ENCODE measurements at regions of chr6 and their contacts with region 1.

Region 1: GRCh38 chr6:113858480-113859348 is 1.6 kb downstream of the MARCKS start:
- DNase-seq: peak; percentile 77
- ATAC-seq: peak; percentile 83
- H3K4me3 ChIP-seq: peak overlapping the region; percentile 94 to 98
- H3K27ac ChIP-seq: peak overlapping the region; percentile 79
- H3K4me1 ChIP-seq: peaks cover 11 to 28% of the 10 kb centered on the region in 2 experiments; a peak in 3 of 4 replicates
- H3K27me3 ChIP-seq: no peaks in the 10 kb centered on the region
- CTCF ChIP-seq: peak; percentile 40 to 86 (median 79); a peak in 5 of 6 replicates
- POLR2A ChIP-seq: peak; percentile 57
- RAD21 ChIP-seq: peak; percentile 81

Region 2: DNA sequence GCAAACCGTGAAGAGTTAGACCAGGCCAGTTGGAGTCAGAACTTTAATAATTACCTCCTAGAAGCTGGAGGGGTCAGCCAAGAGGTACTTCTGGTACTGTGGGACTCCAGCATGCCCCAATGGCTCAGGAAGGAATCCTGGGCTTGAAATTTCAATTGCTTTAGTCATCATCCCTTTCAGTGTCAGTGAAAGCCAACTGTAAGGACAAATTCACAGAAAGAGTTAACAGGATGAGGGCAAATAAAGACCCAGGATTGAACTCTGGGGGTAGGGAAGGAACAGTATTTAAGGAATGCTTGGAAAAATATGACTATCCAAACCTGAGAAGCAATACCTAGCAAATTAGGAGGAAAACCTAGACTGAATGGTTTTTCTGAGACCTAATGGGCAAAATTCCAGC is 736.7 kb before region 1 on chr6:
- CTCF ChIA-PET with region 1: interaction called, 3 read pairs
- POLR2A ChIA-PET with region 1: no interaction called
- RAD21 ChIA-PET with region 1: no interaction called
- intact Hi-C with region 1: loop called (anchors 1 kb)
- DNase-seq: peak; percentile 73
- ATAC-seq: peak; percentile 82
- H3K4me3 ChIP-seq: no peak overlapping the region
- H3K27ac ChIP-seq: no peak overlapping the region
- H3K4me1 ChIP-seq: peaks cover 17 to 32% of the 10 kb centered on the region in 2 experiments; a peak in 3 of 4 replicates
- H3K27me3 ChIP-seq: no peaks in the 10 kb centered on the region
- CTCF ChIP-seq: peak; percentile 25 to 47 (median 38); a peak in 5 of 6 replicates
- POLR2A ChIP-seq: no peak
- RAD21 ChIP-seq: peak; percentile 58

Region 3: DNA sequence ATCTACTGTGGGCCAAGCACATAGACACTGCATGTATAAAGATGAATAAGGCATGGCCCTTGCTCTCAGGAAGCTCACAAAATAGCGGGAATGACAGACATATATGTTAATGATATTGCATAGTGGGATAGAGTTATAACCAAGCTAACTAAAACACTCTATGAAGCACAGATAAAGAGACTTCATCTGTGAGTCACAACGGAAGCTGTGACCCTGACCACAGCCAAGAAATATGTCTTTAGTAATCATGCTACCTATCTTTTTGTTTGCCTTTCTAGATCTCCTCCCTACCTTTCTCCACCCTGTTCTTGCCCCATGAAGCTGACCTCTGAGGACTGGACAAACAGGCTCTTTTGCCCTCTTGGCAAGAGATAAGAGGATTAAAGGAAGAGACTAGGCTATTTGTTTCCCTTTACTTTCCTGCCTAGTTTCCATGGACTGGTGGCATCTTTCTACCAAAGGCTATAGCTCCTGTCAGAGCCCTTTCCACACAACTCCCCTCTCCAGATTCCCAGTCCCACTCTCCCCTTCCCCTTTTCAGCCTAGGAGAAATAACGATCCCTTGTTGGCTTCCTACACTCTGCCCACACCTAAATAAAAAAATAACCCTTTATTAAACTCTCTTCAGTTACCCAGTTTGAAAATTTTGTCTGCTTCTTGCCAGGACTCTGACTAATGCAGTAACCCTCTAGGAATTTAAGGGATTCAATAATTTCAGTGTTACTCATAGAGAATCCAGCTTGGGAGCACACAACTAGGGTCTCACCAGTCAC is 506.5 kb before region 1 on chr6:
- CTCF ChIA-PET with region 1: interaction called, 3 read pairs
- POLR2A ChIA-PET with region 1: interaction called, 4 read pairs
- RAD21 ChIA-PET with region 1: no interaction called
- intact Hi-C with region 1: loop called (anchors 5 kb)
- DNase-seq: peak; percentile 90
- ATAC-seq: peak; percentile 88
- H3K4me3 ChIP-seq: peak overlapping the region in 1 of 2 experiments; percentile 43; a peak in 3 of 4 replicates
- H3K27ac ChIP-seq: peak overlapping the region; percentile 53; the same call in 1 of the 2 replicates
- H3K4me1 ChIP-seq: peaks cover 21 to 57% of the 10 kb centered on the region in 2 experiments
- H3K27me3 ChIP-seq: no peaks in the 10 kb centered on the region
- CTCF ChIP-seq: no peak
- POLR2A ChIP-seq: no peak
- RAD21 ChIP-seq: peak; percentile 27

Region 4: GRCh38 chr6:113464959-113465358 is 393.8 kb before region 1 on chr6:
- CTCF ChIA-PET with region 1: interaction called, 5 read pairs
- POLR2A ChIA-PET with region 1: interaction called, 4 read pairs
- RAD21 ChIA-PET with region 1: no interaction called
- intact Hi-C with region 1: loop called (anchors 5 kb)
- DNase-seq: peak; percentile 42
- ATAC-seq: peak; percentile 89
- H3K4me3 ChIP-seq: peak overlapping the region in 1 of 2 experiments; percentile 4; a peak in 1 of 4 replicates
- H3K27ac ChIP-seq: no peak overlapping the region
- H3K4me1 ChIP-seq: peaks cover 8 to 19% of the 10 kb centered on the region in 2 experiments
- H3K27me3 ChIP-seq: no peaks in the 10 kb centered on the region
- CTCF ChIP-seq: no peak
- POLR2A ChIP-seq: no peak
- RAD21 ChIP-seq: peak; percentile 26; the same call in 1 of the 2 replicates

Region 5: GRCh38 chr6:113690281-113691259 is 168.1 kb before region 1 on chr6:
- CTCF ChIA-PET with region 1: interaction called, 4 read pairs
- POLR2A ChIA-PET with region 1: interaction called, 3 read pairs
- RAD21 ChIA-PET with region 1: no interaction called
- intact Hi-C with region 1: loop called (anchors 1 kb)
- DNase-seq: no peak
- ATAC-seq: no peak
- H3K4me3 ChIP-seq: no peak overlapping the region
- H3K27ac ChIP-seq: no peak overlapping the region
- H3K4me1 ChIP-seq: peaks cover 14 to 48% of the 10 kb centered on the region in 2 experiments; a peak in 3 of 4 replicates
- H3K27me3 ChIP-seq: no peaks in the 10 kb centered on the region
- CTCF ChIP-seq: no peak
- POLR2A ChIP-seq: no peak
- RAD21 ChIP-seq: peak; percentile 5; the same call in 1 of the 2 replicates

Region 6: DNA sequence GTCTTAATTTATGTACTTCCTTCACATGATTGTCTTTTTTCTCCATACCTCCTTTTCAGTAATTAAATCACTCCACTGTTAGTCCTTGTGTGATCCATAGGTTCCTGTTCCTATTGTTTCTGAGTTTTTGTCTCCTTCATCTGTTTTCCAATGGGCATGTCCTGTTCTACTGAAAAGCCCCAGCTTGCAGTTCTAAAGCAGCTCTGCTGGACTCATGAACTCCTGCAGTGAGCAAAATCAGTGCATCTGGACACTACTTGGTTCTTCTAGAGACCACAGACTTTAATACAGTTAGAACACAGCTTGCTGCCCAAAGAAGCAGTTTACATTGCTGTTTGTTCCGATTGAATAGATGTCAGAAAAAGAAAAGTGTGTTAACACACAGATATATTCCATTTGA is 1077.4 kb after region 1 on chr6:
- CTCF ChIA-PET with region 1: no interaction called
- POLR2A ChIA-PET with region 1: no interaction called
- RAD21 ChIA-PET with region 1: no interaction called
- intact Hi-C with region 1: no loop called
- DNase-seq: no peak
- ATAC-seq: no peak
- H3K4me3 ChIP-seq: no peak overlapping the region
- H3K27ac ChIP-seq: no peak overlapping the region
- H3K4me1 ChIP-seq: no peaks in the 10 kb centered on the region
- H3K27me3 ChIP-seq: no peaks in the 10 kb centered on the region
- CTCF ChIP-seq: no peak
- POLR2A ChIP-seq: no peak
- RAD21 ChIP-seq: no peak

Measured in HCT116 (cell line).